GM10248 (cell line): ENCODE measurements at regions of chr9 and their contacts with region 1.

Region 1: DNA sequence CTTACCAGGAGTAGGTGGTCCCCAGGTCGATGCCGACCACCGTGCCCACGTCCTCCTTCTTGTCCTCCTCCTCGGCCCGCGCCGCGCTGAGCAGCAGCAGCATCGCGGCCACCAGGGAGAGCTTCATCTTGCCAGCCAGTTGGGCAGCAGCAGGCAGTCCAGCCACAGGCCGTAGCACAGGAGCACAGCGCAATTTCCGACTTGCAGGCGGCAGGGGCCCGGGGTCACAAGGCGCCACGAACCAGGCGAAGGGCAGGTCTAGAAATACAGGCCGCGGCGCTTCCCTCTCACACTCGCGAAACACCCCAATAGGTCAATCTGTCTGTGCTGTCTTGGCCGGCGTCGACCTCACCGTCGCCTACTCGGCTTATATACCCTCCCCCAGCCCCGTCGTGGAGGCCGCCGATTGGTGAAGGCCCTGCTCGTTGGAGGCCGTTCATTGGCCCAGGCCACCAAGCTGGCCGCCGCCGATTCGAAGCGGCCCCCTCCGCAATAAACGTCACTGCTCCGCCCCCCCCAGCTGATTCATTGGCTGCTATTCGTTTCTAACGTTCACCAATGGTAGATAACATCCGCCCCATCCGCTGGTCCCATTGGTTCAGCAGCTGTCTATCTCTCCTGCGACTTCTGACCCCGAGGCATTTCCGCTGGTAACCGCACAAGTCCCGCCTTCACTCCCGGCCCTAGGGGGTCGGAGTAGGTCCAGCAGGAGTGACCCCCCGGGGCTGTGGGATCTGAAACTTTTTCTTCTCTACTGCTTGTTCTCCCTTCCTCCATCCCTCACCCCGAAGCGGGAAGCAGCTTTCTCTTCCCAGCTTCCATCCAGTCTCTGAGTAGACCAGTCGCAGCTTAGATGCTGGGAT is at the start of gene HSPA5:
- DNase-seq: peak; percentile 98
- CTCF ChIP-seq: no peak

Region 2: DNA sequence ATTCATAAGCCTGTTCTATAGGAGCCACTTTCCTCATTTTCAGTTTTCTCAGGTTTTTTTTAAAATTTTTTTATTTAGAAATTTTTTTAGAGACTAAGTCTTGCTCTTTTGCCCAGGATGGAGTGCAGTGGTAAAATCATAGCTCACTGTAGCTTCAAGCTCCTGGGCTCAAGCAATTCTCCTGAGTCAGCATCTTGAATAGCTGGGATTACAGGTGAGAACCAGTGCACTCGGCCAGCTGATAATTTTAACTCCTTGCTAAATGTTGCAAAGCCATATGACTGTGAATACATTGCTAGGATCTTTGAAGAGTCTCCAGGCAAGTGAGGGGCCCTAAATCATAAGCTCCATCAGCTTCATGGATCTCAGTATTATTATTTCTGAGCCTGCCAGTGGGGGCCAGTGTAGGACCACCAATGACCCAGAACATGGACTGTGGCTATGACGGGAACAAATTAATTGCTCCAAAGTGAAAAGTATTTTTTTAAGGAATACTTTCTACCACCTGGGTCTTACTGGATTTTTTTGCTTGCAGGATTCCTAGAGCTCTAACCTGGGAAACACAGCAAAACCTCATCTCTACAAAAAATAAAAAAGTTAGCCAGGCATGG is 14.7 kb after region 1 on chr9:
- CTCF ChIA-PET with region 1: interaction called, 17 read pairs
- POLR2A ChIA-PET with region 1: interaction called, 24 read pairs
- DNase-seq: no peak
- CTCF ChIP-seq: peak; percentile 46

Region 3: GRCh38 chr9:125261501-125262293 is 20.5 kb after region 1 on chr9 and contains the start of gene GAPVD1:
- CTCF ChIA-PET with region 1: interaction called, 17 read pairs
- POLR2A ChIA-PET with region 1: interaction called, 24 read pairs
- DNase-seq: peak; percentile 99
- CTCF ChIP-seq: peak; percentile 25

Region 4: DNA sequence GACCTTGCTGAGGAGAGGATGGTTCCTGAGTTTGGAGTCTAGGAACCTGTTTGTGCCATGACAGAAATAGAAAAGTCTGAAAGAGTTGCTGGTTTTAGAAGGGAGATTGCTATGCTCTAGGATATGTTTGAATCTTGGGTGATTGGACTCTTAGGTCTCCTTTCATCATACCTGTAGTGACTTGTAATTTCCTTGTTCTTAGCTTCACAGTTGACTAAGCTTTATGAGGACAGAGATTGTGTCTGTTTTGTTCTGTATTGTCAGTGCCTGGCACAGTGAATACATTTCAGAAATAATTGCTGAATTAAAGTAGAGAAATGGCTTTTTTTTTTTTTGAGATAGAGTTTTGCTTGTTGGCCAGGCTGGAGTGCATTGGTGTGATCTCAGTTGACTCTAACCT is 51.9 kb after region 1 on chr9:
- CTCF ChIA-PET with region 1: no interaction called
- POLR2A ChIA-PET with region 1: no interaction called
- DNase-seq: no peak
- CTCF ChIP-seq: no peak